Activated naive CD8-positive, alpha-beta T cell treated with anti-CD3 and anti-CD28 coated beads, Interleukin-2, amount 10 ng/mL, durations not matched to agents 7 days and 5 days (primary cell): ENCODE measurements at regions of chr1 and their contacts with region 1.

Region 1: DNA sequence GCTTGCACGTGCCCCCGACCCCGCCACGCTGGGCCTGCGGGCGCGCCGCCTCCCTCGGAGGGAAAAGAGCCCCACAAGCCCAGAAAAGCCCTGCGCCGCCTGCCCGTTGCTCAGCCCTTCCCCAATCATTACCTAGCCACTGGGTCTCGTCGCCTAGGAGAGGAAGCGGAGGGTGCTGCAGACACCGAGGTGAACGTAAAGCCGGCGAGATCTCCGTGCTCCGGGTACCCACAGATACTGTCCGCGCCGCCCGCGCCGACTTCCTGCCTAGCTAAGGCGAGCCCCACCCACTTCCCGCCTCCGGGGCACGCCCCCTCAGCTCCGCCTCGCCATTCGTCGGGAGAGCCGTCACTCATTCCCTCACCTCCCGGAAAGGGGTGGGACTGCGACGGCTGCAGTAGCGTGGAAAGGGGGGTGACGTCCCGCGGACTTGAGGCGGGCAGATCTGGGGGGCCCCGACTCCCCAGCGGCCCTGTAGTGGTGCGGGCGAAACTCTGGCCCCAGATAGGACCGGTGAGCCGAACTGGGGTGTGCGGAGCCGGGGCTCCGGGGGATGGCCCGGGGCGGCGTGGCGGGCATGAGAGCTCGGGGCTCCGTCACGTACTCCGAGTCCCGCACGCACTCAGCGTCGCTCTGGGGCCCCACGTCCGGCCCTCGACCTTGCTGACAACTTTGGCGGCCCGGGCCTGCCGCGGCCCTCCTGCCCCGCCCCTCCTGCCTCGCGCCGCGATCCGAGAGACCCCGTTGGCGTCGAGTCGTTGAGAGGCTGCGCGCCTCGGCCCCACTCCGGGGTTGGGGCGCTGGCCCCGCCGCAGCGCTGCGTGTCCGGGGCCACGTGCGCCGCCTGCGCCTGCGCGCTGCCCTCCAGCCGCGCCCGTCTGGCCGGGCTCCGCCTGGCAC is at the start of gene ENO1:
- DNase-seq: peak; percentile 100
- ATAC-seq: peak; percentile 80
- H3K4me3 Mint-ChIP-seq: peak within 1 kb of the TSS; percentile 96
- H3K27ac Mint-ChIP-seq: peak within 1 kb of the TSS; percentile 98
- H3K4me1 Mint-ChIP-seq: peaks cover 30% of the 10 kb centered on the region
- H3K27me3 Mint-ChIP-seq: no peaks in the 10 kb centered on the region
- total RNA-seq, gene ENO1: 2,428 to 2,545 TPM

Region 2: DNA sequence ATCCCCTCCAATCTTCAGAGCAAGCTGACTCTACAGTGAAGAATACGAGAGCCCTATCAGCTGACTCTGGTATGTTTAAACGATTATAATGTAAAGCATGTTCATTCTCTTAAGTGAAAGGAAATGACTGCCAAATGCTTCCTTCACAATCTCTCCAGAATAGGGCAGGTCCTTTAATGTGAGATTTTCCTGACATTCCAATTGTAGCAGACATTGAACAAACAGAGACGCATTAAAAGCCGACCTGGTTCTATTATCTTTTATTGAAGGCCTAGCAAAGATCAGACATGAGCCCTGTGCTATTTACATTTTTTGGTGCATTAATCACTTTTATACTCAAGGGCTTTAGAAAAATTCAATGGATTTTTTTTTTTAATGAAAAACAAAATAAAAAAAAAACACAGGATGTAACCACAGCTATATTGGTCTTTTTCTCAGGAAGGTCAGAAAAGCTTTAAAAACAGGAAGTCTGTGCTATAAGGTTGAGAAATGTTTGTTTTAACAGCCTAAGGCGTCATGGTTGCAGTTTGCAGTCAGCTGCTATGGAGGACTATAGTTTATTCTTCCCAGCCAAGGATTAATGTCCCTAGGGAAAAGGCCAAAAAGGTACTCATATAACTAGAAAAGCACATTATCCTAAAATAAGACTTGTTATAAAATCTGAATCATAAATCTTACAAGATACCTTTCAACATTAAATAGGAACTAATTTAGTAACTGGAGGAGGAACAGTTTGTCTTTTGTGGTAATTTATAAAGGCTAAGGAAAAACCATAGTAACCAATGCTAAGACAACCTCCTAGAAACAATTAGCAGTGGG is 166.1 kb before region 1 on chr1:
- POLR2A ChIA-PET with region 1: no interaction called
- DNase-seq: no peak
- ATAC-seq: peak; percentile 52
- H3K4me3 Mint-ChIP-seq: peak overlapping the region; percentile 23
- H3K27ac Mint-ChIP-seq: peak overlapping the region; percentile 52
- H3K4me1 Mint-ChIP-seq: peaks cover 14% of the 10 kb centered on the region
- H3K27me3 Mint-ChIP-seq: no peaks in the 10 kb centered on the region

Region 3: GRCh38 chr1:8858888-8859706 is 19.6 kb before region 1 on chr1:
- POLR2A ChIA-PET with region 1: interaction called, 32 read pairs
- DNase-seq: no peak
- ATAC-seq: peak; percentile 38
- H3K4me3 Mint-ChIP-seq: peak overlapping the region; percentile 48
- H3K27ac Mint-ChIP-seq: peak overlapping the region; percentile 64
- H3K4me1 Mint-ChIP-seq: peaks cover 47% of the 10 kb centered on the region
- H3K27me3 Mint-ChIP-seq: no peaks in the 10 kb centered on the region

Region 4: GRCh38 chr1:8903908-8904650 is 25.4 kb after region 1 on chr1:
- POLR2A ChIA-PET with region 1: interaction called, 78 read pairs
- DNase-seq: no peak
- ATAC-seq: no peak
- H3K4me3 Mint-ChIP-seq: no peak overlapping the region
- H3K27ac Mint-ChIP-seq: peak overlapping the region; percentile 76
- H3K4me1 Mint-ChIP-seq: peaks cover 56% of the 10 kb centered on the region
- H3K27me3 Mint-ChIP-seq: no peaks in the 10 kb centered on the region

Region 5: DNA sequence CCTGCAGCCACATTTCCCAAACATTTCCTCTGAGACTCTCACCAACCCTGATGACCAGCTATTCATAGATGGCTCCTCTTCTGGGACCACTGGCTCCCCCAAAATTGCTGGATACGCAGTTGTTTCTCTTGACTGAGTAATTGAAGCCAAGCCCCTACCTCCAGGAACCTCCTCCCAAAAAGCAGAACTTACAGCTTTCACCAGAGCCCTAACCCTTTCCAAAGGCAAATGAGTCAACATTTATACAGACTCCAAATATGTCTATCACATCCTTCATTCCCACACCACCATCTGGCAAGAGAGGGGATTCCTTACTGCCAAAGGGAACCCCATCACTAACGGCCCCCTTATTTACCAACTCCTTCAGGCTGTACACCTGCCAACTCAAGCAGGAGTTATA is 46.7 kb after region 1 on chr1:
- POLR2A ChIA-PET with region 1: interaction called, 193 read pairs
- DNase-seq: no peak
- ATAC-seq: no peak
- H3K4me3 Mint-ChIP-seq: no peak overlapping the region
- H3K27ac Mint-ChIP-seq: no peak overlapping the region
- H3K4me1 Mint-ChIP-seq: peaks cover 28% of the 10 kb centered on the region
- H3K27me3 Mint-ChIP-seq: no peaks in the 10 kb centered on the region

Region 6: GRCh38 chr1:8962812-8963530 is 84.3 kb after region 1 on chr1:
- POLR2A ChIA-PET with region 1: interaction called, 179 read pairs
- DNase-seq: peak; percentile 71
- ATAC-seq: peak; percentile 53
- H3K4me3 Mint-ChIP-seq: peak overlapping the region; percentile 79
- H3K27ac Mint-ChIP-seq: peak overlapping the region; percentile 86
- H3K4me1 Mint-ChIP-seq: peaks cover 70% of the 10 kb centered on the region
- H3K27me3 Mint-ChIP-seq: no peaks in the 10 kb centered on the region

Region 7: DNA sequence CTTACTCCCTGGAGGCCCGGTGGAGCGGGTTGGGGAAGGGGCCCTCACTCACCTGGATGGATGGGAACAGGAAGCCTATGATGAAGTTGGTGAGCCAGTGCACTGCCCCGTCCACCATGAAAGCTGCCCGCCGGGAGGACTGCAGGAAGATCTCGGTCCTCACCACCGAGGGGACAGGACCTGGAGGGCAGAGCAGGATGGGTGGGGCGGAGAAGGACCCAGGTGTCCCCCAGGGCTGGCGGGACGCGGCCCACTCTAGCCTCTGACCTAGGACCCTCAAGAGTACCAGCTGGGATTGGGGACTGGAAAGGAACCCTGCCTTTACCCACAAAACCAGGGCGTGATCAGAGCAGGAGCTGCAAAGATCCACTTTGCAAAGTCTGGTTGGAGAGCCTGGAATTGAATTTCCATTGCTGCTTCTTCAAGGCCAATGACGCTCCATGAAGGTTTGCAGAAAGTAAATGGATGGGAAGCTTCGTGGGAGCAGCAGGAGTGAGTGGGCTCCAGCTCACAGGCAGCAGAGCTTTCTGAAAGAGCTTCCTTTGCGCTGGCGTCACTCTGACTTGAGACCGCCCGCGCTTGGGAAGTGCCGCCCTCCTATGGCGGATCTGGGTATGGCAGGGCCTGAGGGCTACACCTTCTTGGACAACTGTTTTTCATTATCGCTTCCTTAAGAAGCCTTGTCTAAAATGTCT is 126.1 kb after region 1 on chr1:
- POLR2A ChIA-PET with region 1: interaction called, 20 read pairs
- DNase-seq: peak; percentile 94
- ATAC-seq: peak; percentile 76
- H3K4me3 Mint-ChIP-seq: peak overlapping the region; percentile 77
- H3K27ac Mint-ChIP-seq: peak overlapping the region; percentile 81
- H3K4me1 Mint-ChIP-seq: peaks cover 17% of the 10 kb centered on the region
- H3K27me3 Mint-ChIP-seq: peaks cover 3% of the 10 kb centered on the region